Activated naive CD8-positive, alpha-beta T cell treated with anti-CD3 and anti-CD28 coated beads, Interleukin-2, amount 10 ng/mL, durations not matched to agents 7 days and 5 days (primary cell): ENCODE measurements at regions of chr21 and their contacts with region 1.

Region 1: DNA sequence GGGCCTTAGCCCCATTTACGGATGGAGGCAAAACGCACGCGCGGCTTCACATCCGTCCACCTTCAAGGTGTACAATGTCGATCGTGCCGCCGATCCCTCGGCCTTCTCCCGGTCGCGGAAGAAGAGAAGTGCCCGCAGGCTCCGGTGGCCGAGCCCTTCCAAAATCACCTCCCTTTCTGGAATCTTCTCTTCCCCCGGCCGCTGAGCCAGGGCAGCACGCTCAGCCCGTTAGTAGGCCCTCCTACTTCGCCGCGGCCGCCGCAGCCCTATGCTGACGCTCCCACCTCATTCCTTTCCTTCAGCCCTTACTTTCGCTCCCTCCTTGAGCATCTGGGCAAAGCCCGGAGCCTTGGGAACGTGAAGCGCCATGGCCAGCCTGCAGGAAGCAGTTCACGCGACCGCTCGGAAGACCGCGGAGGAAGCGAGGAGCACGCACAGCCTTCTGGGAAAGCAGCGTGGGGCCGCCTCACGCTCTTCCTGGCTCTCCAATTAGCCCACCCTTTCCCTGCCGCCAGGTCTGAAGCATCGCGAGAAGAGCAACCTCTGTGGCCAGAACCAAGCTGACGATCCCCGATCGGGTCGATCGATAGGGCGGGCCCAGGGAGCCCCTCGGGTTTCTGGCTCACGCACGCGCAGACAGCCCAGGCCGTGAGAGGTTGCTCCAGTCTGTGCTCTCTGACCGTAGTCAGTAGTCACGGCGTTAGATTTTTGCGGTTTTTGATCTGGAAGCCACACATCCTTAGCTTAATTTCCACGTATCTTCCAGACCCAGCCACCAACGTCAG is at the start of gene CCT8:
- DNase-seq: peak; percentile 96
- ATAC-seq: peak; percentile 87
- H3K4me3 Mint-ChIP-seq: peak within 1 kb of the TSS; percentile 99
- H3K27ac Mint-ChIP-seq: peak within 1 kb of the TSS; percentile 99
- H3K4me1 Mint-ChIP-seq: peaks cover 40% of the 10 kb centered on the region
- H3K27me3 Mint-ChIP-seq: no peaks in the 10 kb centered on the region
- total RNA-seq, gene CCT8: 184 to 185 TPM

Region 2: DNA sequence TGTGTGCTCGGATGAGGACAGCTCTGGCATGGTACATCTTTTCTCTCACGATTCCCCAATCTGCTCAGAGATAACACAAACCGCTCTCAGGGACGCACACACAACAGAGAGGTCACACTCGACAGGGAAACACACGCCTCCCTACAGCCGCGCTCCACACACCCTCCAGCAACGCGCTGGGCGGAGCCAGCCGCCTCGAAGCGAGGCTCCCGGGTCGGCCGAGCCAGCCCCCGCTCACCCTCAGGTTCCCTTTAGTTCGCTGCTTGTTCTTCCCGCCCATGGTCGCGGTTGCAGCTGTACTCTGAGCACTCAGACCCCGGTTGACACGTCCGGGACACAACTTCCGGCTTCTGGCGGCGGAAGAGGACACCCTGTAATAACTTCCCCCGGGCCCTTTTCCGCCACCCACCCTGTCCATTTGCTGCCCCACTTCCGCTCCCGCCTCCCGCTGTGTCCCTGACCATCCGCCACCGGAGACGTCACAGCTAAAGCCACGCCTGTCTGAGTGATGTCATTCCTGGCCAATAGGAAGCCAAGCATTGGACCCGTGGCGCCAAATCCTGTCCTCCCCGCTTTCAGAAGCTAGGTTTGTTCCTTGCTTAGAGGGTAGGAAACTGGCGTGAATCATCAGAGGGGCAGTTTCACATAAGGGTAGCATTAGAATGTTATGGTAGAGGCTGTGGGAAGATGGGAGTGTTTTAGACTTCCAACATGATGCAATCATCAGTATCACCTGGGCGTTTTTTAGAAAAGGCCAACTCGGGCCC is 80.7 kb before region 1 on chr21 and contains the start of gene LTN1:
- POLR2A ChIA-PET with region 1: interaction called, 19 read pairs
- DNase-seq: peak; percentile 96
- ATAC-seq: peak; percentile 95
- H3K4me3 Mint-ChIP-seq: peak within 1 kb of the TSS; percentile 96
- H3K27ac Mint-ChIP-seq: peak within 1 kb of the TSS; percentile 95
- H3K4me1 Mint-ChIP-seq: peaks cover 27% of the 10 kb centered on the region
- H3K27me3 Mint-ChIP-seq: no peaks in the 10 kb centered on the region
- total RNA-seq, gene LTN1: 27.4 to 29.3 TPM

Region 3: DNA sequence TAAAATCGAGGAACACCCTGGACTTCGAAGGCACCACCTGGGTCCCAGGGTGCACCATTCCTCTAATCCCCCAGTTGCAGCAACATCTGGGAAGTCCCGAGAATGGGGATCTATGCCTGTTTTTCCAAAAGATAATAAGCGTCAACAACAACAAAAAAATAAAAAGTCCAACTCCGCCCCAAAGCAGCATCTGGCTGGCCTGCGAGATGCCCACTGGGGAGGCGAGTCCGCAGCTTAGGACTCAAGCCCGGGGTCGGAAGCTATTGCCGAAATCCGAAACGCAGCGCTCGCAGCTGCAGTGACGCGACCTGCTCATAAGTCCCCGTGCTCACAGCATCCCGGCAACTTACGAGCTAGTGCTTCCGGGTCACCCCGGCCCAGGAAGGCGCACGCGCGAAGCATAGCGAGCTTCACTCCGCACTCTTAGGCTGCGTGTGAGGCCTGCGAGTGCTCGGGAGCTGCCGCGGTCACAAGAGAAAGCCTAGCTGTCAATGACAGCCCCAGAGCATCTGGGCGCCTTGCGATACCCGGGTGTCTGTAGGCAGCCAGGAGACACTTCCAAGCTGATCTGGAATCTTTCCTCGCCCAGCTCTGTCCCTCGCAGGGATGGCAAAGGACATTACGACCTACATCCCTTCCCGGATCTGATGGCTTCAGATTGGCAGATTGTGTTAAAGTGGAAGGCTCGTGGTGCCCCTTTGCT is 70.8 kb before region 1 on chr21:
- POLR2A ChIA-PET with region 1: interaction called, 11 read pairs
- DNase-seq: peak; percentile 91
- ATAC-seq: peak; percentile 100
- H3K4me3 Mint-ChIP-seq: peak overlapping the region; percentile 86
- H3K27ac Mint-ChIP-seq: peak overlapping the region; percentile 95
- H3K4me1 Mint-ChIP-seq: peaks cover 7% of the 10 kb centered on the region
- H3K27me3 Mint-ChIP-seq: no peaks in the 10 kb centered on the region

Region 4: DNA sequence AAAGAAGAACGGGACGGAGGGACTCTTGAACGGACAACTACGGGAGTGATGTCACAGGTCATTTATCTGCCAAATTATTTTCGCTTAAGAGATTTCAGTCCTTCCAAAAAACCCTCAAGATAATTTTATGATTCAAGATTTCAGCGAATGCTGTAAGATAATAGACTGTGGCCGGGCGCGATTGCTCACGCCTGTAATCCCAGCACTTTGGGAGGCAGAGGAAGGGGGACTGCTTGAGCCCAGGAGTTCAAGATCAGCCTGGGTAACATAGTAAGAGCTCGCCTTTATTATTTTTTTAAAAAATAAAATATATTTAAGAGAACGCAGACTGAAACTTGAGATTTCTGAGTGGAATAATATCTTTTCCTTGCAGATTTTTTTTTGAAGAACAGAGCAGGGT is 54.9 kb before region 1 on chr21:
- POLR2A ChIA-PET with region 1: interaction called, 33 read pairs
- DNase-seq: no peak
- ATAC-seq: no peak
- H3K4me3 Mint-ChIP-seq: peak overlapping the region; percentile 85
- H3K27ac Mint-ChIP-seq: peak overlapping the region; percentile 93
- H3K4me1 Mint-ChIP-seq: peaks cover 29% of the 10 kb centered on the region
- H3K27me3 Mint-ChIP-seq: no peaks in the 10 kb centered on the region

Region 5: DNA sequence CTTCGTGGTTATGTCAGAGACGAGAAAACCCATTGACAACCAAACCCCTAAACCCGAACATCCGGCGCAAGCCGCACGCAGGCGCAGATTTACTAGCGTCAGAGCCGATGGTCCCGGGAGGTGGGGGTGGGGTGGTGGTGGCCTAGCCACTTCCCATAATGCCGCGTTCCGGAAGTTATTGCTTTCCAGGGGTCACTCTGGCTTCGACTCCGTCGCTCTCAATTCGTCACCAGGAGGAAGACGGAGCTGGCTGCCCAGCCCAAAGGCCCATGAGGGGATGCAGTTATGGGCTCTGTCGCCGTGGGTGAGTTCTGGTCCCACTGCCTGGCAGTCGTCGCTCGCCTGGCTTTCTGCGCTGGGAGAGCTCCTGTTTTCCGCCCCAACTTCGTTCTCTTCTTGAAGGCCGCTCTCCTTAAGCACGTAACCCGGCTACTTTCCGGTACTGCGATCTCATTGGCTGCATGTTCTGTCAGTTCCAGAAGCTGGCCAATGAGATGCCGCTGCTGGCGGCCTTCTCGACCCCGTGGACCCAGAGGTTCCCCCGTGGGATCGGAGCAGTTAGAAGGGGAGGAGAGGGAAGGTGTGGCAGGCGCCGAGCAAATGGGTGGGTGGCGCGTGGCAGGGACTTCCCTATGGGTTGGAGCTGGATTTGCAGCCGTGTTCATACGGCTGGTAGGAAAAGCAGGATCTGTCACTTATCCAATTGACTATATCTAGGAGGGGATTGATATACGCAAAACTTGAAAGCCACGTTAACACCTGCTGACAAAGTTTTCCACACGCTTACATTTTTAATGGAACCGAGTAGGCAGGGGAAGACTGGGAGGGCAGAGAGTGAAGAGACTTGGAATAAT is 48.7 kb before region 1 on chr21 and contains the start of gene USP16:
- POLR2A ChIA-PET with region 1: interaction called, 33 read pairs
- DNase-seq: peak; percentile 93
- ATAC-seq: peak; percentile 96
- H3K4me3 Mint-ChIP-seq: peak within 1 kb of the TSS; percentile 93
- H3K27ac Mint-ChIP-seq: peak within 1 kb of the TSS; percentile 98
- H3K4me1 Mint-ChIP-seq: peaks cover 42% of the 10 kb centered on the region
- H3K27me3 Mint-ChIP-seq: no peaks in the 10 kb centered on the region
- total RNA-seq, gene USP16: 39.5 to 40.9 TPM

Region 6: GRCh38 chr21:29098156-29098555 is 24.7 kb after region 1 on chr21:
- POLR2A ChIA-PET with region 1: no interaction called
- DNase-seq: no peak
- ATAC-seq: no peak
- H3K4me3 Mint-ChIP-seq: no peak overlapping the region
- H3K27ac Mint-ChIP-seq: no peak overlapping the region
- H3K4me1 Mint-ChIP-seq: no peaks in the 10 kb centered on the region
- H3K27me3 Mint-ChIP-seq: no peaks in the 10 kb centered on the region

Region 7: GRCh38 chr21:29145354-29145782 is 72.0 kb after region 1 on chr21:
- POLR2A ChIA-PET with region 1: no interaction called
- DNase-seq: no peak
- ATAC-seq: no peak
- H3K4me3 Mint-ChIP-seq: no peak overlapping the region
- H3K27ac Mint-ChIP-seq: no peak overlapping the region
- H3K4me1 Mint-ChIP-seq: peaks cover 19% of the 10 kb centered on the region
- H3K27me3 Mint-ChIP-seq: peaks cover under 1% of the 10 kb centered on the region

Region 8: GRCh38 chr21:29298348-29299045 is 225.1 kb after region 1 on chr21 and contains the start of gene BACH1:
- POLR2A ChIA-PET with region 1: interaction called, 18 read pairs
- DNase-seq: peak; percentile 92
- ATAC-seq: peak; percentile 84
- H3K4me3 Mint-ChIP-seq: peak within 1 kb of the TSS; percentile 89
- H3K27ac Mint-ChIP-seq: peak within 1 kb of the TSS; percentile 77
- H3K4me1 Mint-ChIP-seq: peaks cover 38% of the 10 kb centered on the region
- H3K27me3 Mint-ChIP-seq: no peaks in the 10 kb centered on the region
- total RNA-seq, gene BACH1: 33.2 to 35.0 TPM